ENCODE measurements at regions of chr17 and their contacts with region 1.

Region 1: GRCh38 chr17:44110823-44111633 is 12.4 kb downstream of the HDAC5 start:
- DNase-seq: peak; percentile 86
- ATAC-seq: peak; percentile 60 to 75
- H3K4me3 ChIP-seq: 0 out of 3 replicates have a peak overlapping the region, but pooled peaks have one; percentile 1
- H3K27ac ChIP-seq: peak overlapping the region; percentile 65 to 86
- H3K4me1 ChIP-seq: peaks cover 59% of the 10 kb centered on the region
- CTCF ChIP-seq: no peak
- EP300 ChIP-seq: peak in 1 of 2 experiments; percentile 37; a peak in 2 of 5 replicates
- POLR2A ChIP-seq: no peak
- RAD21 ChIP-seq: peak in 1 of 2 experiments; percentile 37; a peak in 1 of 5 replicates

Region 2: DNA sequence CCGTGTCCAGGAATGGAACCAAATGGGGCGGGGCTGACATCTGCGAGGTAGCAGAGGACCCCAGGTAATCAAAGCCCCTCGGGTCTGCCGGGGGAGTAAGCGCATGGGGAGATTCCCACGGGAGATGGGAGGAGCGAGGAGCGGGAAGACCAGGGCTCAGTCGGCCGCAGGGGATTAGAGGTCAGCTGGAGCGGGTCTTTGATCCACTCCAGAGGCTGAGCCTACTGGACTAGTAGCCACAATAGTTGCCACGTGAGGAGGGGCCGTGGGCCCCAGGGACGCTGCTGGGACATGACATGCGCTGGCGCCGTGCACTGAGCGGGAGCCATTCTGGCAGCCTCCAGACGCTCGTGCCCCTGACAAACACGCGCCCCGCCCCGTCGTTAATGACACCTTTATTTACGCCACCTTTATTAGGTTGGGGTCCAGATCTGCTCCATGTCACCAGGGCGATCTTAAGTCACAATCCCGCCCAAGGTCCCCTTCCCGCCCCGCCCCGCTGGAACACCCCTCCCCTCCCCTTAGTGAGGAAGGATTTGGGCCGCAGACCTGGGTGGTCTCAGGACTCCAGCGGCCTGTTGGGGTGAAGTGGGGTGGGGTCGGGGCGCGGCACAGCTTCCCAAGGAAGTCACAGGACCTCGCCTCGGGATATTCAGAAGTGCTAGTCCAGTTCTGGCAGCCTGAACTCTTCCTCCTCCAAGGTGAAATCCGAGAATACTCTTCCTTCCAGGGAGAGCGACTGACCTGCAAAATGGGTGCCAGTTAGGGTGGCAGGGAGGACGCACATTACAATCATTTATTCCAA is 183.8 kb before region 1 on chr17:
- CTCF ChIA-PET with region 1: no interaction called
- POLR2A ChIA-PET with region 1: no interaction called
- DNase-seq: no peak
- ATAC-seq: no peak
- H3K4me3 ChIP-seq: no peak overlapping the region
- H3K27ac ChIP-seq: no peak overlapping the region
- H3K4me1 ChIP-seq: peaks cover 14% of the 10 kb centered on the region
- CTCF ChIP-seq: no peak
- EP300 ChIP-seq: no peak
- POLR2A ChIP-seq: no peak
- RAD21 ChIP-seq: no peak

Region 3: GRCh38 chr17:43946069-43946696 is 164.8 kb before region 1 on chr17:
- CTCF ChIA-PET with region 1: interaction called, 21 read pairs
- POLR2A ChIA-PET with region 1: no interaction called
- DNase-seq: peak in 1 of 2 experiments; percentile 35
- ATAC-seq: no peak
- H3K4me3 ChIP-seq: no peak overlapping the region
- H3K27ac ChIP-seq: no peak overlapping the region
- H3K4me1 ChIP-seq: no peaks in the 10 kb centered on the region
- CTCF ChIP-seq: no peak
- EP300 ChIP-seq: no peak
- POLR2A ChIP-seq: no peak
- RAD21 ChIP-seq: no peak

Region 4: GRCh38 chr17:44044067-44044466 is 67.0 kb before region 1 on chr17:
- CTCF ChIA-PET with region 1: interaction called, 27 read pairs
- POLR2A ChIA-PET with region 1: no interaction called
- DNase-seq: no peak
- ATAC-seq: no peak
- H3K4me3 ChIP-seq: no peak overlapping the region
- H3K27ac ChIP-seq: 0 out of 6 replicates have a peak overlapping the region, but pooled peaks of 1 of the 2 experiments have one; percentile 0
- H3K4me1 ChIP-seq: peaks cover 11% of the 10 kb centered on the region
- CTCF ChIP-seq: no peak
- EP300 ChIP-seq: no peak
- POLR2A ChIP-seq: no peak
- RAD21 ChIP-seq: no peak

Region 5: GRCh38 chr17:44086364-44087311 is 24.4 kb before region 1 on chr17:
- CTCF ChIA-PET with region 1: interaction called, 1,202 read pairs
- POLR2A ChIA-PET with region 1: interaction called, 10 read pairs
- DNase-seq: peak; percentile 87 to 96
- ATAC-seq: peak; percentile 65 to 76
- H3K4me3 ChIP-seq: peak overlapping the region; percentile 0; the same call in 1 of the 3 replicates
- H3K27ac ChIP-seq: peak overlapping the region; percentile 84 to 89
- H3K4me1 ChIP-seq: peaks cover 32% of the 10 kb centered on the region
- CTCF ChIP-seq: no peak
- EP300 ChIP-seq: peak in 1 of 2 experiments; percentile 42; a peak in 1 of 5 replicates
- POLR2A ChIP-seq: no peak
- RAD21 ChIP-seq: peak in 1 of 2 experiments; percentile 49; a peak in 3 of 5 replicates

Region 6: DNA sequence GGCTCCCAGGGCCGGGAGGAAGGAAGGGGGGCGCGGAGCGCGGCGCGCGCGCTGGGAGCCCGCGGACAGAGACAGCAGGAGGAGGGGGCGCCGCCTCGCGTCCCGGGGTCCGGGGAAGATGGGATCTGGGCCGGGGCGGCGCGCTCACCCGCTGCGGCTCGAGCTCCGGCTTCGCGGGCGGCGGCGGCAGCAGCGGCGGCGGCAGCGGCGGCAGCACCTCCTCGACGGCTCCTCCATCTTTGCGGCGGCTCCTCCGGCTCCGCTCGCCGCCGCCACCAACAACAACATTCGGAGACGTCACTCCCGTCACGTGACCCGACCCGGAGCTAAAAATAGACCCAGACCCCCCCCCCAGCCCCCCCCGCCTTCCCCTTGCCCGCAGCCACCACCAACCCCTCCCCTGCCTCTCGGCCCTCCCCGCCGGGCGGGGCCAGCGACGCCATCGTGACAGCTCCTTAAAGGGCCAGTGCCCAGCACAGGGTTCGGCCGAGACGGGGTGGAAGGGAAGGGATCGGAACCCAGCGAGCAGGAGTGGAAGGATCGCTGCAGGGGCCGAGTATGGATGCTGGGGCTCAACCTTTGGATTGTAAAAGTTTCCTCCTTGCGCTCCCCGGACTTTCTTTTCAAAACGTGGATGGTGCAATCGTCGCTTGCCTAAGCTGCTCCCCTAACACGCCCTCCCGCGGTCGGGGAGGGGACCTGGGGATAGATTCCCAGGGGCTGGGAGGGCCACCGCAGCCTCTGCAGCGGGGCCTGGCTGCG is 12.5 kb after region 1 on chr17 and contains the start of gene HDAC5:
- CTCF ChIA-PET with region 1: interaction called, 1,202 read pairs
- POLR2A ChIA-PET with region 1: interaction called, 50 read pairs
- DNase-seq: peak; percentile 92 to 96
- ATAC-seq: peak; percentile 84 to 92
- H3K4me3 ChIP-seq: peak within 1 kb of the TSS; percentile 81
- H3K27ac ChIP-seq: peak within 1 kb of the TSS; percentile 87 to 93
- H3K4me1 ChIP-seq: peaks cover 28% of the 10 kb centered on the region
- CTCF ChIP-seq: peak; percentile 68
- EP300 ChIP-seq: no peak
- POLR2A ChIP-seq: peak; percentile 60
- RAD21 ChIP-seq: peak; percentile 53 to 63
- polyA plus RNA-seq, gene HDAC5: 3.1 and 5.7 TPM in 2 replicates

Region 7: GRCh38 chr17:44152875-44153274 is 41.8 kb after region 1 on chr17:
- CTCF ChIA-PET with region 1: interaction called, 33 read pairs
- POLR2A ChIA-PET with region 1: no interaction called
- DNase-seq: no peak
- ATAC-seq: no peak
- H3K4me3 ChIP-seq: no peak overlapping the region
- H3K27ac ChIP-seq: peak overlapping the region; percentile 45 to 65; a peak in 4 of 6 replicates
- H3K4me1 ChIP-seq: no peaks in the 10 kb centered on the region
- CTCF ChIP-seq: no peak
- EP300 ChIP-seq: no peak
- POLR2A ChIP-seq: no peak
- RAD21 ChIP-seq: no peak

Region 8: DNA sequence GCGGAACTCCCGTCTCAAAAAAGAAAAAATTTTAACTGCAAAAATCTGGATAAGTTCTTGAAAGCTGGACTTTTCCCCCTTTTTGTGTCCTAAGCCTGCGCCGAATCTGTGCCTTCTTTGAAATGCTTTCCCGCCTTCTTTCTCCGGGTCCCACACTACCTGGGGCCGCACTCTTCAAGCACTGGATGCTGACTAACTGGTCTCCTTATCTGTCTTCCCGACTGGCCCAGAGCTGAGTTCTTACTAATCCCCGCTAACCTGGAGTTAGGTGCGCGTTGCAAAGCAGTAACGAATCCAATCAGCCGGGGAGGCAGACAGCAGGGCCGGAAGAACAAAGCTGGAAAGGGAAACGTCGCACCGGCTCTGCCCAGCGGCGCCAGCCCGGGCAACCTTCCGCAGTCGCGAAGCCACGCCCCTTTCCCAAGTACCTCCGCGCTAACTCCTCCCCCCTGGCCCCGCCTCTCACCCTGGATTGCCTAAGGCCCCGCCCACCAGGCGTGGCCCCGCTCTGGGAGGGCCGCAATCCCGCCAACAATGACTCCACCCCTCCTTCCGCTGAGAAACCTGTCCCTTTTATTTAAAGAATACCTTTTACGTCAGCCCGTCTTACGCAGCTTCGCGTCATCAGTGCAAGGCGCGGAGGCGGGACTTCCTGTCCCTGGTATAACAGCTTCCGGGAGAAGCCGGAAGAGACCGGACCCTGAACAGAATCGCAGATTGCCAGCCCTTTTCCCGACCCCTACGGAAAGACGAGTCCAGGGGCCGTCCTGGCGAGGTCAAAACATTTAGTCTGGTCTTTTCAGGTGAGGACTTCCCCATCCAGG is 75.5 kb after region 1 on chr17 and contains the start of gene TMUB2:
- CTCF ChIA-PET with region 1: interaction called, 12 read pairs
- POLR2A ChIA-PET with region 1: interaction called, 5 read pairs
- DNase-seq: peak; percentile 100
- ATAC-seq: peak; percentile 85 to 88
- H3K4me3 ChIP-seq: peak within 1 kb of the TSS; percentile 87
- H3K27ac ChIP-seq: peak within 1 kb of the TSS; percentile 92 to 97
- H3K4me1 ChIP-seq: peaks cover 24% of the 10 kb centered on the region
- CTCF ChIP-seq: no peak
- EP300 ChIP-seq: no peak
- POLR2A ChIP-seq: peak; percentile 98
- RAD21 ChIP-seq: no peak
- polyA plus RNA-seq, gene TMUB2: 36.2 and 43.3 TPM in 2 replicates

Measured in A549 (cell line).